ENCODE measurements at regions of chr17 and their contacts with region 1.

Region 1: GRCh38 chr17:4420692-4421131 is 13.0 kb upstream of the SPNS3 start:
- DNase-seq: peak; percentile 82
- ATAC-seq: peak; percentile 96
- H3K4me3 Mint-ChIP-seq: no peak overlapping the region
- H3K27ac Mint-ChIP-seq: peak overlapping the region; percentile 20
- H3K4me1 Mint-ChIP-seq: peaks cover 8% of the 10 kb centered on the region
- H3K27me3 Mint-ChIP-seq: no peaks in the 10 kb centered on the region

Region 2: GRCh38 chr17:4215882-4216570 is 204.7 kb before region 1 on chr17:
- CTCF ChIA-PET with region 1: interaction called, 73 read pairs
- POLR2A ChIA-PET with region 1: no interaction called
- DNase-seq: no peak
- ATAC-seq: no peak
- H3K4me3 Mint-ChIP-seq: no peak overlapping the region
- H3K27ac Mint-ChIP-seq: no peak overlapping the region
- H3K4me1 Mint-ChIP-seq: peaks cover 7% of the 10 kb centered on the region
- H3K27me3 Mint-ChIP-seq: no peaks in the 10 kb centered on the region

Region 3: GRCh38 chr17:4443476-4443875 is 22.8 kb after region 1 on chr17:
- CTCF ChIA-PET with region 1: interaction called, 11 read pairs
- POLR2A ChIA-PET with region 1: no interaction called
- DNase-seq: no peak
- ATAC-seq: no peak
- H3K4me3 Mint-ChIP-seq: no peak overlapping the region
- H3K27ac Mint-ChIP-seq: no peak overlapping the region
- H3K4me1 Mint-ChIP-seq: peaks cover 7% of the 10 kb centered on the region
- H3K27me3 Mint-ChIP-seq: no peaks in the 10 kb centered on the region

Region 4: GRCh38 chr17:4504178-4504577 is 83.5 kb after region 1 on chr17:
- CTCF ChIA-PET with region 1: interaction called, 19 read pairs
- POLR2A ChIA-PET with region 1: no interaction called
- DNase-seq: peak; percentile 41
- ATAC-seq: peak; percentile 49
- H3K4me3 Mint-ChIP-seq: peak overlapping the region; percentile 56
- H3K27ac Mint-ChIP-seq: peak overlapping the region; percentile 87
- H3K4me1 Mint-ChIP-seq: peaks cover 84% of the 10 kb centered on the region
- H3K27me3 Mint-ChIP-seq: peaks cover 22% of the 10 kb centered on the region

Region 5: DNA sequence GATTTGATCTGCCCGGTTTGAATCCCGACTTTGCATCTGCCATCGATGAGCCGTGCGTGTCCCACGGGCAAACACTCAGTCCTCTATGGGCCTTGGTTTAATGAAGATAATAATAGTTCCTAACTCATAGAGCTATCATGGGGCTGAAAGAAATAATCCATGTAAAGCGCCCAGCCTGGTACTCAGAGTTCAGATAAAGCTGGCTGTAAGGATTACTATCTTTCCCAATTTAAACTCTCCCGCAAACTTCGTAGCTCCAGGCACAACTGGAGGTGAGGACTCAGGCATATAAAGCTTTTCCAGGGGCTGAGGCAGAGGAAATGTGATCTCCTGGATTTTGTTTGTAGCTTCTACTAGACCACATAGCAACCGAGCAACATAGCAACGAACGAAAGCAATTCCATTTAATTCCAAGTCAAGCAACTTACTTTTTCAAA is 204.5 kb after region 1 on chr17:
- CTCF ChIA-PET with region 1: interaction called, 36 read pairs
- POLR2A ChIA-PET with region 1: no interaction called
- DNase-seq: no peak
- ATAC-seq: no peak
- H3K4me3 Mint-ChIP-seq: no peak overlapping the region
- H3K27ac Mint-ChIP-seq: no peak overlapping the region
- H3K4me1 Mint-ChIP-seq: peaks cover 3% of the 10 kb centered on the region
- H3K27me3 Mint-ChIP-seq: peaks cover 24% of the 10 kb centered on the region